MCF 10A (cell line): ENCODE measurements at regions of chr12 and their contacts with region 1.

Region 1: GRCh38 chr12:91778938-91779400 is 366.7 kb downstream of the BTG1 start:
- DNase-seq: peak; percentile 95
- H3K4me3 Mint-ChIP-seq: peak overlapping the region; percentile 65
- H3K27ac Mint-ChIP-seq: peak overlapping the region; percentile 88
- H3K4me1 Mint-ChIP-seq: peaks cover 39% of the 10 kb centered on the region
- H3K27me3 Mint-ChIP-seq: no peaks in the 10 kb centered on the region
- CTCF ChIP-seq: no peak

Region 2: DNA sequence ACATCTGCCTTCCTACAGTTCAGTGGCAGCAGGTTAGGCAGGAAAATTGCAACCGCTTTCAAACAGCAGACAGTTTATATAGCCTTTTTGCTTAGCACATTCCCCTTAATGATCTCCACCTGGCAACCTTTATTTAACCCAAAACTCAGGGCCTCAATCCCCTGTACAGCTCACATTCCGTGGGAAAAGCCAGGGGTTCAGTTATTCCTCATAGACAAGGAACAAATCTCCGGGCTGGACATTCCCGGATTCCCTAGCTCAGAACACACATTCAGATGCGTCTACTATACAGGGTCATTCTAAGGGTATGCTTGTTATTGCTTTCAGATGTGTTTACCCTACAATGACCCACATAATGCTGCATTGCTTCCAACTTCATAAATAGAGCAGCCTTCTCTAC is 522.6 kb before region 1 on chr12:
- CTCF ChIA-PET with region 1: no interaction called
- POLR2A ChIA-PET with region 1: no interaction called
- intact Hi-C with region 1: no loop called
- DNase-seq: no peak
- H3K4me3 Mint-ChIP-seq: no peak overlapping the region
- H3K27ac Mint-ChIP-seq: no peak overlapping the region
- H3K4me1 Mint-ChIP-seq: no peaks in the 10 kb centered on the region
- H3K27me3 Mint-ChIP-seq: peaks cover 70% of the 10 kb centered on the region
- CTCF ChIP-seq: no peak

Region 3: DNA sequence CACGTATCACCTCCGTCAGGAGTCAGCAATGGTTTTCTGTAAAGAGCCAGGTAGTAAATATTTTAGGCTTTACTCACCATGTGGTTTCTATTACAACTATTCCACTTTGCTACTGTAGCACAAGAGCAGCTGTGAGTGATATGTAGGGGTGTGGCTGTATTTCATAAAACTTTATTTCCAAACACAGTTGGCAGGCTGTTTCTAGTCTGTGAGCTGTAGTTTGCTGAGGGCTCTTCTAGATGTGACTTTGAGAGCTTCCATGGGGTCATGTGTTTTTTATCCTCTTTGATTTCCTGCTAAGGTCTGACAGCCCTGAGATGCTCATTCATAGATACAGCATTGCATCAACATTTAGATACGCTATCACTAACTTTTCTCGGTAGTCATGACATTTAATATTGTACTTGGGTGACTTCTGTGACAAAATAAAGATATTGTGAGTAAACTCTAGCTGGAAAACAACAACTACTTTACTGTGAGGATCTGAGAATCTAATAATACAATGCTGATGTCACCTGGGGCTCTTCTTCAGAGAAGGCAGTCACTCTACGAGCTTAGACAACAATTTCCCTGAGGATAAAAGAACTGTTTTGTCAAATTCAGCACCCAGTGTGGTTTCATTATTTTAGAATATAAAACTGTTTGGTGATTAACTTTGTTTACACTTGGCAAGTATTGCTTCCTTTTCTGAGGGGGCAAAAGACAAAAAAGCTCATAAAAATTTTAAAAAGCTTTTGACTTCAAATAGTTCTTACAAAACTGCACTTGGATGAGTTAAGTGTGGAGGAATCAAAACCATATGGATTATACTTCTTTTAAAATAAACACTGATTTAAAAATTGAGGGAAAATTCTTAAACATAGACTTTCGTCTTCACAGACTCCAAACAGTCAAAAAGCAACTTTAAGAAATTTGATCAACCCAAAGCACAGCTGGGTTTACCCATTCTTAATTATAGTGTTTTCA is 365.1 kb before region 1 on chr12:
- CTCF ChIA-PET with region 1: no interaction called
- POLR2A ChIA-PET with region 1: interaction called, 11 read pairs
- intact Hi-C with region 1: loop called (anchors 5 kb)
- DNase-seq: peak; percentile 85
- H3K4me3 Mint-ChIP-seq: no peak overlapping the region
- H3K27ac Mint-ChIP-seq: peak overlapping the region; percentile 66
- H3K4me1 Mint-ChIP-seq: peaks cover 16% of the 10 kb centered on the region
- H3K27me3 Mint-ChIP-seq: no peaks in the 10 kb centered on the region
- CTCF ChIP-seq: no peak

Region 4: DNA sequence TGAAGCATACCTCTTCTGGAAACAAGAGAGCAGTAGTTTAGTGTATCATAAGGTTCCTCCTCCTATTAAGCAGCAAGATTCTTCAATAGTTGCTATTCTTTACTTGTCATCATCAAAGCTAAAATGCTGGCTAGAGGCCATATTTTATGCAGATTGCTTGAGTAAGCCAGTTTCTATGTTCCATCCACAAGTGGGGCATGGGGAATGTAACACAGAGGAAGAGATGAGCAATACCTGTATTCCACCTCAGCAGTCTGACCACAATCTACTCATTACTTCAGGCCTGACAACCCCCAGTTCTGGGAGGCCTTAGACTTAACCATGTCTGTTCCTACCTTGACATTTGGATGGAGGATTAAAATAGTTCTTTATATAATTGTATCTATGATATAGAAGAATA is 56.9 kb before region 1 on chr12:
- CTCF ChIA-PET with region 1: interaction called, 4 read pairs
- POLR2A ChIA-PET with region 1: interaction called, 32 read pairs
- intact Hi-C with region 1: no loop called
- DNase-seq: peak; percentile 50
- H3K4me3 Mint-ChIP-seq: no peak overlapping the region
- H3K27ac Mint-ChIP-seq: peak overlapping the region; percentile 42
- H3K4me1 Mint-ChIP-seq: peaks cover 42% of the 10 kb centered on the region
- H3K27me3 Mint-ChIP-seq: no peaks in the 10 kb centered on the region
- CTCF ChIP-seq: no peak

Region 5: GRCh38 chr12:91811481-91812287 is 32.7 kb after region 1 on chr12:
- CTCF ChIA-PET with region 1: interaction called, 15 read pairs
- POLR2A ChIA-PET with region 1: interaction called, 107 read pairs
- intact Hi-C with region 1: no loop called
- DNase-seq: peak; percentile 61
- H3K4me3 Mint-ChIP-seq: no peak overlapping the region
- H3K27ac Mint-ChIP-seq: peak overlapping the region; percentile 43
- H3K4me1 Mint-ChIP-seq: peaks cover 11% of the 10 kb centered on the region
- H3K27me3 Mint-ChIP-seq: no peaks in the 10 kb centered on the region
- CTCF ChIP-seq: peak; percentile 57

Region 6: GRCh38 chr12:91926848-91927247 is 147.9 kb after region 1 on chr12:
- CTCF ChIA-PET with region 1: no interaction called
- POLR2A ChIA-PET with region 1: interaction called, 10 read pairs
- intact Hi-C with region 1: no loop called
- DNase-seq: peak; percentile 57
- H3K4me3 Mint-ChIP-seq: no peak overlapping the region
- H3K27ac Mint-ChIP-seq: peak overlapping the region; percentile 75
- H3K4me1 Mint-ChIP-seq: peaks cover 18% of the 10 kb centered on the region
- H3K27me3 Mint-ChIP-seq: no peaks in the 10 kb centered on the region
- CTCF ChIP-seq: no peak

Region 7: DNA sequence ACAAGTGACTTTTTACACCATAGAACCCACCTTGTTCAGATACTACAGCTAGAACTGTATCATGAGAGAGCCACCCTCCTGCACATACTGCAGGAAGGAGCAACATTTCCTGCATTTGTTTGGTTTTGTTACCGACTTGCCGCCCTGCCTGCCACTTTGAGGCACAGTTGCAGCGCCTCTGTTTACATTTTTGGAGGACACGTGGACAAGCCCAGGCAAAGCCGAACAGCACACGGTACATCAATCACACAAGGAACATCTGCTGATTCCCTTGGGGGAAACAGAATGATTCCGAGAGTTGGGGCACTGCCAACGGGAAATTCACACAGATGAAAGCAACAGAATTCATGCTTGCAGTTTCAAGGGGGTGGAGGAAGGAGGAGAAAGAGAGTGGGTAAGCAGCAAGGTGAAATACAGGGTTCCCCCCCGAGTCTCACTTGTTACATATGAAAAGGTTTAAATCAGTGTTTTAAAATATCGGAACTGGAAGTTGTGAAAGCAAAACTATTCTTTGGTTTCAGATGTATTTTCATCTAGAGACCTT is 256.0 kb after region 1 on chr12:
- CTCF ChIA-PET with region 1: no interaction called
- POLR2A ChIA-PET with region 1: interaction called, 12 read pairs
- intact Hi-C with region 1: no loop called
- DNase-seq: peak; percentile 95
- H3K4me3 Mint-ChIP-seq: peak overlapping the region; percentile 76
- H3K27ac Mint-ChIP-seq: peak overlapping the region; percentile 96
- H3K4me1 Mint-ChIP-seq: peaks cover 53% of the 10 kb centered on the region
- H3K27me3 Mint-ChIP-seq: no peaks in the 10 kb centered on the region
- CTCF ChIP-seq: no peak